Body of pancreas (tissue), 4 donors: ENCODE measurements at regions of chr12 and their contacts with region 1.

Region 1: GRCh38 chr12:32494656-32495055 is 95.3 kb downstream of the FGD4 start:
- DNase-seq: no peak
- ATAC-seq: no peak
- H3K4me3 ChIP-seq: no peak overlapping the region
- H3K27ac ChIP-seq: no peak overlapping the region
- H3K4me1 ChIP-seq: peaks cover 27% of the 10 kb centered on the region
- H3K27me3 ChIP-seq: no peaks in the 10 kb centered on the region
- CTCF ChIP-seq: no peak
- POLR2A ChIP-seq: no peak

Region 2: GRCh38 chr12:32548691-32549281 is 54.1 kb after region 1 on chr12:
- intact Hi-C with region 1: loop called (anchors 10 kb)
- DNase-seq: peak; percentile 23 to 60 (median 42)
- ATAC-seq: peak; percentile 67
- H3K4me3 ChIP-seq: no peak overlapping the region
- H3K27ac ChIP-seq: peak overlapping the region in 2 of 4 donors; percentile 39 to 63
- H3K4me1 ChIP-seq: peaks cover 48% of the 10 kb centered on the region
- H3K27me3 ChIP-seq: no peaks in the 10 kb centered on the region
- CTCF ChIP-seq: no peak
- POLR2A ChIP-seq: no peak